ENCODE measurements at regions of chr4 and their contacts with region 1.

Region 1: GRCh38 chr4:78951862-78952472 is 12.7 kb upstream of the PAQR3 start:
- DNase-seq: peak; percentile 46
- ATAC-seq: no peak
- H3K4me3 Mint-ChIP-seq: no peak overlapping the region
- H3K27ac Mint-ChIP-seq: no peak overlapping the region
- H3K4me1 Mint-ChIP-seq: no peaks in the 10 kb centered on the region
- H3K27me3 Mint-ChIP-seq: peaks cover 12% of the 10 kb centered on the region

Region 2: GRCh38 chr4:79232540-79232939 is 280.6 kb after region 1 on chr4:
- CTCF ChIA-PET with region 1: no interaction called
- POLR2A ChIA-PET with region 1: no interaction called
- intact Hi-C with region 1: no loop called
- DNase-seq: no peak
- ATAC-seq: no peak
- H3K4me3 Mint-ChIP-seq: no peak overlapping the region
- H3K27ac Mint-ChIP-seq: no peak overlapping the region
- H3K4me1 Mint-ChIP-seq: no peaks in the 10 kb centered on the region
- H3K27me3 Mint-ChIP-seq: no peaks in the 10 kb centered on the region

Region 3: GRCh38 chr4:79576429-79576753 is 624.4 kb after region 1 on chr4:
- CTCF ChIA-PET with region 1: interaction called, 4 read pairs
- POLR2A ChIA-PET with region 1: no interaction called
- intact Hi-C with region 1: loop called (anchors 1 to 2 kb)
- DNase-seq: peak; percentile 21
- ATAC-seq: peak; percentile 53
- H3K4me3 Mint-ChIP-seq: no peak overlapping the region
- H3K27ac Mint-ChIP-seq: no peak overlapping the region
- H3K4me1 Mint-ChIP-seq: no peaks in the 10 kb centered on the region
- H3K27me3 Mint-ChIP-seq: no peaks in the 10 kb centered on the region

Region 4: DNA sequence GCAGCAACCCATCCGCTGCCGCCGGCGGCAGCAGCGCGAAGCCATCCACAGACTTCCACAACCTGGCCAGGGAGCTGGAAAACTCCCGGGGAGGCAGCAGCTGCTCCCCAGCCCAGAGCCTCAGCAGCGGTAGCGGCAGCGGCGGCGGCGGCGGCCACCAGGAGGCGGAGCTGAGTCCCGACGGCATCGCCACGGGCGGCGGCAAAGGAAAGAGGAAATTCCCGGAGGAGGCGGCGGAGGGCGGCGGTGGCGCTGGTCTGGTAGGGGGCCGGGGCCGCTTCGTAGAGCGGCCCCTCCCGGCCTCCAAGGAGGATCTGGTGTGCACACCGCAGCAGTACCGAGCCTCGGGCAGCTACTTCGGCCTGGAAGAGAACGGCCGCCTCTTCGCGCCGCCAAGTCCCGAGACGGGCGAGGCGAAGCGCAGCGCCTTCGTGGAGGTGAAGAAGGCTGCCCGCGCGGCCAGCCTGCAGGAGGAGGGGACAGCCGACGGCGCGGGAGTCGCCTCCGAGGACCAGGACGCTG is 1250.3 kb after region 1 on chr4:
- CTCF ChIA-PET with region 1: no interaction called
- POLR2A ChIA-PET with region 1: no interaction called
- intact Hi-C with region 1: loop called in 1 of 2 experiments (anchors 5 kb)
- DNase-seq: peak; percentile 88
- ATAC-seq: peak; percentile 66
- H3K4me3 Mint-ChIP-seq: peak overlapping the region; percentile 68
- H3K27ac Mint-ChIP-seq: peak overlapping the region; percentile 64
- H3K4me1 Mint-ChIP-seq: peaks cover 30% of the 10 kb centered on the region
- H3K27me3 Mint-ChIP-seq: peaks cover 17% of the 10 kb centered on the region

Region 5: DNA sequence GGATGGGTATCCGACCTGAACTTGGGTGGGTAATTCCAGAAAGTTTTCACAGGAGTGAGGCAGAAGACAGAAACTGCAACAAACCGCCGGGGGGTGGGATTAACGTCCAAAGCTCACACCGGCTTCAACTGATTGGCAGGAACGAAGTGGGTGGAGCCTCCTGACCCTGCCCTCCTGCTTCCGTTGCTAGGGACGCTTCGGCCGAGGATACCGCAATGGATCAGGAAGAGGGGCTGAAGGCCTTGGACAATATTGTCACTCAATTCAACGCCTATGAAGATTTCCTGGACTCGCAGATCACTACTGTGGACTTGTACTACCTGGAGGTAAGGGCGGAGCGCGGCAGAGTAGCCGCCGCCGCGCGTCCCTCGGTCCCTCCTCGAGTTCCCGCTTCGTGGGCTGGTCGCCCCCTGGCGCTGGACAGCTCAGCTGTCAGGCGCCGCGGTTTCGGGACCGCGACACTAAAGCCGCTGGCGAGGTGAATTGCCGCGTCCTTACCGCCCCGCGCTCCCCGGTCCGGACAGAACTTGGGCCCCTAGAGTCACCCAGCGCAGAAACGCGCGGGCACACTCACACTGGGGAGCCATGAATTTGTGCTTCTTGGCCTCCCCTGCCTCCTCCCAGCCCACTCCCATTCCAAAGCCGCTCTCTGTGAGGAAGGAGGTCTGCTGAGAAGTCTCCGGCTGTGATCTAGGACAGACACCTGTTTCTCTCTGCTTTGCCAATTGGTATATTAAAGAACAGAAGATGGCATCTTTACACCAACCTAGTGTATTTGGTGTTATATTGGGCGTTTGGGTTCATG is 1383.8 kb after region 1 on chr4 and contains the start of gene CFAP299:
- CTCF ChIA-PET with region 1: no interaction called
- POLR2A ChIA-PET with region 1: no interaction called
- intact Hi-C with region 1: loop called in 1 of 2 experiments (anchors 10 kb)
- DNase-seq: peak; percentile 82
- ATAC-seq: peak; percentile 93
- H3K4me3 Mint-ChIP-seq: peak within 1 kb of the TSS; percentile 76
- H3K27ac Mint-ChIP-seq: no peak within 1 kb of the TSS
- H3K4me1 Mint-ChIP-seq: peaks cover 9% of the 10 kb centered on the region
- H3K27me3 Mint-ChIP-seq: peaks cover 19% of the 10 kb centered on the region
- total RNA-seq, gene CFAP299: not detected